ENCODE measurements at regions of chr17 and their contacts with region 1.

Region 1: DNA sequence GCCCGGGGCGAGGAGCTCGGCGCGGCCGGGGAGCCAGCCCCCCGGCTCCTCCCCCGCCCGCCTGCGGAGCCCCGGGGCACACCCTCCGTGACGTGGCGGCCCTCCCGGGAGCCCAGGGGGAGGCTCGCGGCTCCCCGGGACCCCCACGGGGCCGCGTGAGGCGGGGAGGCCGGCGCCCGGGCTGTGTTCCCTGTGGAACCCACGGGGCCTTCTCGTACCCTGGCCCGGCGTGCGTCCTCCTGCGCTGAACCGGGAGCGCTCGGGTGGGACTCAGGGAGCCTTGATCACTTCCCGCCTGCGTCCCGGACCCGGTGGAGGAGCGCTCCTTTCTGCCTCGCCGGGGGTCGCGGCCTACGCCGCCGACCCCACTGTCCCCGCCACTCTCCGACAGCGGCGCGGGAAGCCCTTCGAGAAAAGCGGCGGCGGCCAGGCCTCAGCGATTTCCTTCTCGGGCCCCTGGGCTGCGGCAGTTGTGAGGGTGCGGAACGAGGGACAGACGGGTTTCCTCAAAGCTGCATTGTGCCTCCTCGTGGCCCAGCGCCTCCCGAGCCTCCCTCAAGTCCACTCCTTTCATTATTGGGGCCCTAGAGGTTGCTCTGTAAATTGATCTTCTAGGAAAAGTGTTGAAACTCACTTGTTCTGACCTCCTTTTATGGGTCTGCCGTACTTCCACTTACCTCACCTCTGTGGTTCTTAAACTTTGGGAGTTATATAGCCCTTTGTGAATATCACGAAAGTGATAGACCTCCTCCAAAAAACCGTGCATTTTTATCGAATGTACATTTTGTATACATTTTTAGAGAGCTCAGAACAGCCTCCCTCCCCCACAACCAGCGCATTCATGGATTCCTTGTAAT is 597 bp downstream of the LIG3 start:
- DNase-seq: peak; percentile 86 to 93
- ATAC-seq: peak; percentile 91 to 94
- H3K4me3 ChIP-seq: peak overlapping the region; percentile 78
- H3K27ac ChIP-seq: peak overlapping the region; percentile 94 to 97
- H3K4me1 ChIP-seq: peaks cover 14% of the 10 kb centered on the region
- CTCF ChIP-seq: peak; percentile 55
- EP300 ChIP-seq: peak in 1 of 2 experiments; percentile 18; a peak in 1 of 5 replicates
- POLR2A ChIP-seq: peak; percentile 37
- RAD21 ChIP-seq: peak; percentile 52 to 56; a peak in 4 of 5 replicates

Region 2: DNA sequence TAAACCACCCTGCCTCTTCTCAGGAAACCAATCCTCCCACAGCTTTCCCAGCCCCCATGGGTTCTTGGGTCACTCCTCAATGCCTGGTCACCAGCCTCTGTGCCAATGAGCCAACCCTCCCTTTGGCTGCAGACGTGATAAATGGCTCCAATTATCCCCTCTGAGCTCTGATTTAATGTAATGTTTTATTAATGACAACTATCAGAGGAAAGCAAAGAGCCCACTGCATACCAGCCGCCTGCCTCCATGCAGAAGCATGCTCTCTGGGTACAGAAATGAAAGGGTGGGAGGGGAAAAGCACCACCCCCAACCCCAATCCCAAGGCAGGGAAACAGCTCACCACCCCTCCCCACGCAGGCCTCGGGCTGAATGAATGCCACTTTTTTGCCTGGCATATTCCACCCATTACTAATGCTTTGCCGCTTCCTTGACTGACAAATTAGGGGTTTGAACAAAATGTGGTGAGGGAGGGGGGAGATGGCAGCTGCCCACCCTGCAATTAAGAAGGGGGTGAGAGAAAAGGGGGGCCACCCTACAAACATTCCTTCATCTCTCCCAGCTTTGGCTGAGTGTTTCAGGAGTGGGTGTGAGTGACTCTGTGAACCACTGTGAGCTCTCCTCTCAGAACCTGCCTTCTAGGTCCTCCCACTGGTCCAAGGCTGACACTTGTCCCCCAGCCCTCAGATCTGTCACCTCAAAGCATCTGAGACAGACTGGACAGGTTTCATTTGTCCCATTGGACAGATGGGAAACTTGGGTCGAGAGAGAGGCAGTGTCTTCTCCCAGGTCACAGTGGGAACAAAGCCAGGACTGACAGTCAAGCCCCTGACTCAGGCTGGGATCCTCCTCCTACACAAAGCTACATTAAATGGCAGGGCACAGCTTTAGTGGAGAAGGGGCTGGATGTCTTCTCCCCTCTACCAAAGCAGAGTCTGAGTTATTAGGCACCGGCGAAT is 240.1 kb before region 1 on chr17:
- CTCF ChIA-PET with region 1: no interaction called
- POLR2A ChIA-PET with region 1: no interaction called
- DNase-seq: no peak
- ATAC-seq: no peak
- H3K4me3 ChIP-seq: no peak overlapping the region
- H3K27ac ChIP-seq: no peak overlapping the region
- H3K4me1 ChIP-seq: no peaks in the 10 kb centered on the region
- CTCF ChIP-seq: no peak
- EP300 ChIP-seq: no peak
- POLR2A ChIP-seq: no peak
- RAD21 ChIP-seq: no peak

Region 3: DNA sequence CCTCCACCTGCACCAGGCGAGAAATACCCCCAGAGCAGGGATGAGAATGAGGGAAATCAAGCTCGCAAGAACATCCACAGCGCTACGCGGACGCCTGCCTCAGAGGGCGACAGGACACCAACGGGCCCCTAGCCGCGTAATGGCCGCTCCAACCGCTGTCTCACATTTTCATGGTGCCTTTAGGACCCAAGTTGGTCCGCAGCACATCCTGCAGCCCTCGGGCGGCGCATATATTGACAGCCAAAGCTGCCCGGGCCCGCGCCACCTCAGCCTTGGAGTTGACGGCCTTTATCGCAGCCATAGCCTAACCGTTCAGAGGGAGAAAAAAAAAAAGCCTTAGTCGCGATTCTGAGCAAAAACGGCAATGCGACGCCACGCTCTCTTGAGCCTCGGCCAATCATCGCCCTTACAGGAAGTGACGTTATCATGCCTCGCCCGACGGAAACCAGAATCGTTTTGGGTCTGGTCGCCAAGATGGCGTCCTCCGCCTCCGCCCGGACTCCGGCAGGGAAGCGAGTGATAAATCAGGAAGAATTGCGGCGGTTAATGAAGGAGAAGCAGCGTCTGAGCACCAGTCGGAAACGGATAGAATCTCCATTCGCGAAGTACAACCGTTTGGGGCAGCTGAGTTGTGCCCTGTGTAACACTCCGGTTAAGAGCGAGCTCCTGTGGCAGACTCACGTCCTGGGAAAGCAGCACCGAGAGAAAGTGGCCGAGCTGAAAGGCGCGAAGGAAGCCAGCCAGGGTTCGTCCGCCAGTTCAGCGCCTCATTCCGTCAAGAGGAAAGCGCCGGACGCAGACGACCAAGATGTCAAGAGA is 19.6 kb before region 1 on chr17 and contains the starts of genes CCT6B and ZNF830:
- CTCF ChIA-PET with region 1: interaction called, 19 read pairs
- POLR2A ChIA-PET with region 1: interaction called, 20 read pairs
- DNase-seq: peak; percentile 97
- ATAC-seq: peak; percentile 96 to 97
- H3K4me3 ChIP-seq: peak within 1 kb of the TSS; percentile 75
- H3K27ac ChIP-seq: peak within 1 kb of the TSS; percentile 85 to 93
- H3K4me1 ChIP-seq: peaks cover 12% of the 10 kb centered on the region; the same call in 2 of the 3 replicates
- CTCF ChIP-seq: no peak
- EP300 ChIP-seq: no peak
- POLR2A ChIP-seq: peak; percentile 90
- RAD21 ChIP-seq: no peak
- polyA plus RNA-seq, gene CCT6B: 1.9 and 3.1 TPM in 2 replicates
- polyA plus RNA-seq, gene ZNF830: 12.6 and 21.2 TPM in 2 replicates

Region 4: DNA sequence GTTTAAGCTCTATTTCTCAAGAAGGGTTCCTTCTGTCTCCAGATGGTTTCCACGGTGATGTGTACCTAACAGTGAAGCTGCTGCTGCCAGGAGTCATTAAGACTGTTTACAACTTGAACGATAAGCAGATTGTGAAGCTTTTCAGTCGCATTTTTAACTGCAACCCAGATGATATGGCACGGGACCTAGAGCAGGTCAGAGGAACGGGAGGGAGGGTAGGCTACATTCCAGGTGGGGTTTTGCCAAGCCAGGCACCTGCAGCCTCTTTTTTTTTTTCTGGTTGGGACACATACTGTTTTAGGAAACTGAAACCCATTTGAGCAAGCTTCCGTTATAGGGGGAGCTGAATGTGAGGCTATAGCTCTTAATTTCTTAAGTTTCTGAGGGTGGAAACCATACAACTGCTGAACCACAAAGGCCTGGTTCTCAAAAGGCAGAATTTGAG is 10.0 kb after region 1 on chr17:
- CTCF ChIA-PET with region 1: interaction called, 51 read pairs
- POLR2A ChIA-PET with region 1: interaction called, 5 read pairs
- DNase-seq: no peak
- ATAC-seq: no peak
- H3K4me3 ChIP-seq: no peak overlapping the region
- H3K27ac ChIP-seq: no peak overlapping the region
- H3K4me1 ChIP-seq: no peaks in the 10 kb centered on the region
- CTCF ChIP-seq: no peak
- EP300 ChIP-seq: no peak
- POLR2A ChIP-seq: no peak
- RAD21 ChIP-seq: no peak

Measured in A549 (cell line).